ENCODE measurements at regions of chr15 and their contacts with region 1.

Region 1: GRCh38 chr15:31326156-31326732 is 391 bp upstream of the KLF13 start:
- DNase-seq: peak; percentile 100
- H3K4me3 Mint-ChIP-seq: peak overlapping the region; percentile 83
- H3K27ac Mint-ChIP-seq: peak overlapping the region; percentile 88
- H3K4me1 Mint-ChIP-seq: peaks cover 46% of the 10 kb centered on the region
- H3K27me3 Mint-ChIP-seq: no peaks in the 10 kb centered on the region

Region 2: DNA sequence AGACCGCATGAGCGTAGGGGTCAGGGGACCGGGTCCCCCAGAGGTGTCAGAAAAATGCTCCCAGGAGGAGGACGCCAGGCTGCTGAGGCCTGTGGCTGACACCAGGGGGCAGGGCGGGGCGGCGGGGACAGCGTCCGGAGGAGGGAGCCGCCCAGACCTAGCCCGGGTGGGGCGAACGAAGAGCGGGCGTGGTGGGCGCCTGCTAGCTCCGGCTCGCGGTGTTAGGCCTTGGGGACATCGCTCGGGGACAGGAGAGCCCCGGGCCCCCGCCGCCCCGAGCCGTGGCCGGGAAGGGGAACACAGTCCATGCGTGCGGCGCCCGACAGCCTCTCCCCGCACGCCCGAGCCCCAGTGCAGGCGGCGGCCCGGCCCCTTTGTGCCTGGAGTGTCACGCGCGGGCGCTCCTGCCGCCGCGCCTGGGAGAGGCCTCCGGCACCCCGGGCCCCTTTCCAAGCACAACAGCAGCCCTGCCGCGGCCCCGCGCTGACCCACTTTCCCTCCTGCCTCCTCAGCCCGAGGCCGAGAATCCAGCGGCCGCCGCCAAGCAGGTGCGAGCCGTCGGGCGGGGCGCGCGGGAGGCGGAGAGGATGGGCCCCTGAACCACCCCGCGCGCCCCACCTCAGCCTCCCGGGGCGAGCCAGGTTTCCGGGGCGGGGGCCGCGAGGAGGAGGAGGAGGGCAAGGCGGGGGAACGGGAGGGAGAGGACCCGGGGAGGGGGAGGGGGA is 110.6 kb before region 1 on chr15:
- intact Hi-C with region 1: loop called (anchors 1 kb)
- DNase-seq: peak; percentile 94
- H3K4me3 Mint-ChIP-seq: peak overlapping the region; percentile 87
- H3K27ac Mint-ChIP-seq: peak overlapping the region; percentile 71
- H3K4me1 Mint-ChIP-seq: peaks cover 36% of the 10 kb centered on the region
- H3K27me3 Mint-ChIP-seq: no peaks in the 10 kb centered on the region

Region 3: GRCh38 chr15:31338879-31339557 is 12.8 kb after region 1 on chr15:
- intact Hi-C with region 1: loop called (anchors 1 kb)
- DNase-seq: peak; percentile 85
- H3K4me3 Mint-ChIP-seq: peak overlapping the region; percentile 62
- H3K27ac Mint-ChIP-seq: peak overlapping the region; percentile 93
- H3K4me1 Mint-ChIP-seq: peaks cover 85% of the 10 kb centered on the region
- H3K27me3 Mint-ChIP-seq: no peaks in the 10 kb centered on the region

Region 4: DNA sequence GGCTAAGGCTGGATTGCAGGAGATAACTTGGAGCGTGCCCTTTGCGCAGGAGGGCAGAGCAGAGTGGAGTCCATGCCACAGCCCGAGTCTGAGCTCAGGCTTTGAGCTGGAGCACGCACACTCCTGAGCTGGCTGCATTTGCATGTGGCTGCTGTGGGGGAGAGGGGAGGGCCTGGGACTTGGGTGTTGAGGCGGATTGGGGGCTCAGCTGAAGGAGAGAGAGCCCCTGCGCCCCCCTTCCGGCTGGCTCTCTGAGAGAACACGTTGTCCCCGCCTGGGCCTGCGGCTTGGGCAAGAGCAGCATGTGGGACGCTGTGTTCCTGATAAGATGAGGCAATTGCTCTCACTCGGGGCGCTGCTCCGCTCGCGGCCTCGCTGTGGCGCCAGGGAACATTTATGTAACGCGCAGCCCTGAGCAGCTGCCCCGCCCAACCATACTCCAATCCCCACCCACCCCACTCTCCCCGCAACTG is 39.4 kb after region 1 on chr15:
- intact Hi-C with region 1: loop called (anchors 1 kb)
- DNase-seq: peak; percentile 93
- H3K4me3 Mint-ChIP-seq: peak overlapping the region; percentile 83
- H3K27ac Mint-ChIP-seq: peak overlapping the region; percentile 98
- H3K4me1 Mint-ChIP-seq: peaks cover 94% of the 10 kb centered on the region
- H3K27me3 Mint-ChIP-seq: no peaks in the 10 kb centered on the region

Region 5: DNA sequence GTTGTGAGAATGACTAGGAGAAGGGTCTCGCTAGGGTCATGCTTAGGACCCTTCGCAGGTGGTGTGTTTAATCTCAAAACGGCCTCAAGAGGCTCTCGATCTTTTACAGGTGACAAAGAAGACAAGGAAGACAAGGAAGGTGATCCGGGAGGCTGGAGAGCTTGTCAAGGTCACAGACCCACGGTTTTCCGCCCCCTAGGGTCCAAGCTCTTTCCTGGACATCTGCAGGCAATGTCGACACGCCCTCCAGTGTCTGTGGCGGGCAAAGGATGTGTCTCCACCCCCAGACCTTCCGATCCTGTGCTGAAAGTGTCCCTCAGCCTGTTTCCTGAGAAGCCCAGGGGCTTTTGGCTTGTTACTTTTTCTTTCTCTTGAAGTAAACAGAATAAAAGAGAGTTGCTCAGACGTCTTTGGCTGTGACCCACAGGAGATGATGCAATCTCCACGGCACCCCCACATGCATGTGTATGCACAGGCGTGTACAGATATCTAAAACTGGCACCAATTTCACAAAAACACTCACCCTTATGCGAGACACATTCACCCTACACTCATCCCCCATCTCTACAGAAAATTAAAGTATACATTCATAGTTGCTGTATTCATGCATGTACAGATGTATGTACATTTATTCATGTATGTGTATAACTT is 109.1 kb after region 1 on chr15:
- intact Hi-C with region 1: loop called (anchors 1 kb)
- DNase-seq: peak; percentile 96
- H3K4me3 Mint-ChIP-seq: peak overlapping the region; percentile 79
- H3K27ac Mint-ChIP-seq: peak overlapping the region; percentile 96
- H3K4me1 Mint-ChIP-seq: peaks cover 78% of the 10 kb centered on the region
- H3K27me3 Mint-ChIP-seq: no peaks in the 10 kb centered on the region

Region 6: DNA sequence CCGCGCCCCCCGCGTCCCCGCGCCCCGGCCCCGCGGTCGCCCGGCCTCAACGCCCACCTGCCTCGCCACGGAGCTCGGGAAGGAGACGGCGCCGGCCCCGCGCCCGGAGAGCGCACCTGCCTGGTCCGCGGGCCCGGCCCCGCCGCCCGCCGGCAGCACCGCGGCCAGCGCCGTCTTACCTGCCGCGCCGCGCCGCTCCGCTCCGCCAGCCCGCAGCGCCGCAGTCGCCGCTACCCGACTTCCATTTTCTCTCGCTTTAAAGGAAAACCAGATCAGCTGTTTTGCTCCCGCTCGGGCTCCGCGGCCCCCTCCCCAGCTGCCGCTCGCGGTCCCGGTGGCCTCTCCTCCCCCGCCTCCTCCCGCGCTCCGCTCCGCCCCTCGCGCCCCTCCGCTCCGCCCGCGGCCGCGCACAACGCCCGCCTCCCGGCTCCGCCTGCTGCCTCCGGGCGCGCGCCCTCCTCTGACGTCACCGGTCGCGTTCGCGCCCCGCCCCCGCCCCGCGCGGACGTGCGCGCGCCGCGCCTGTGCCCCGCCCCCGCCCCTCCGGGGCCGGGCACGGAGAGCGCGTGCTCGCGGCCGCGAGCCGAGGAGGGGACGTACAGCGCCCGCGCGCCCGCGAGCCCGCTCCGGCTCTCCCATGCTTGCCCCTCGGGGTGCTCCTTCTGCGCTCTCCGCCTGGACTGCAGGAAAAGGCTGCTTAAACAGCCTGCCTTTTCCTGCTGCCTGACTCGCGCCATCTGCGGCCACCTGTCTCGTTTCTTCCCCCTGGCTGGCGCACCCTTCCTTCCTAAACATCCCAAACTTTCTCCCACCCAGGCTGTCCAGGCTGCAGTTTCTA is 544.3 kb after region 1 on chr15:
- intact Hi-C with region 1: loop called (anchors 5 kb)
- DNase-seq: peak; percentile 96
- H3K4me3 Mint-ChIP-seq: peak within 1 kb of the TSS; percentile 87
- H3K27ac Mint-ChIP-seq: peak within 1 kb of the TSS; percentile 83
- H3K4me1 Mint-ChIP-seq: peaks cover 10% of the 10 kb centered on the region
- H3K27me3 Mint-ChIP-seq: peaks cover 42% of the 10 kb centered on the region